ENCODE measurements at regions of chr14 and their contacts with region 1.

Region 1: GRCh38 chr14:74493343-74494261 is at the start of gene ISCA2:
- DNase-seq: peak; percentile 95 to 99 (median 98)
- ATAC-seq: peak; percentile 94
- H3K4me3 ChIP-seq: peak within 1 kb of the TSS; percentile 96
- H3K4me3 Mint-ChIP-seq: peak within 1 kb of the TSS in 1 of 10 donors; percentile 89
- H3K27ac ChIP-seq: peak within 1 kb of the TSS; percentile 91
- H3K27ac Mint-ChIP-seq: peak within 1 kb of the TSS in 7 of 9 donors; percentile 87 to 96 (median 91)
- H3K4me1 ChIP-seq: peaks cover 12 to 18% of the 10 kb centered on the region in 2 donors
- H3K4me1 Mint-ChIP-seq: peaks cover 7 to 45% (median 37%) of the 10 kb centered on the region in 7 donors
- H3K27me3 ChIP-seq: no peaks in the 10 kb centered on the region
- H3K27me3 Mint-ChIP-seq: no peaks in the 10 kb centered on the region
- total RNA-seq, gene ISCA2: 13.9 to 39.5 (median 25.2) TPM

Region 2: GRCh38 chr14:72926292-72927028 is 1567.1 kb before region 1 on chr14 and contains the start of gene DCAF4:
- CTCF ChIA-PET with region 1: no interaction called
- POLR2A ChIA-PET with region 1: no interaction called
- intact Hi-C with region 1: loop called (anchors 5 kb)
- DNase-seq: peak; percentile 67 to 96 (median 92)
- ATAC-seq: peak; percentile 96
- H3K4me3 ChIP-seq: peak within 1 kb of the TSS; percentile 64
- H3K4me3 Mint-ChIP-seq: peak within 1 kb of the TSS; percentile 93 to 99 (median 96)
- H3K27ac ChIP-seq: peak within 1 kb of the TSS; percentile 74
- H3K27ac Mint-ChIP-seq: peak within 1 kb of the TSS; percentile 58 to 96 (median 95)
- H3K4me1 ChIP-seq: peaks cover 0 to 3% of the 10 kb centered on the region in 2 donors
- H3K4me1 Mint-ChIP-seq: peaks cover 2 to 27% (median 11%) of the 10 kb centered on the region in 7 donors
- H3K27me3 ChIP-seq: no peaks in the 10 kb centered on the region
- H3K27me3 Mint-ChIP-seq: peaks cover 0 to 21% (median 0%) of the 10 kb centered on the region in 5 donors
- total RNA-seq, gene DCAF4: 17.6 to 37.8 (median 21.8) TPM

Region 3: DNA sequence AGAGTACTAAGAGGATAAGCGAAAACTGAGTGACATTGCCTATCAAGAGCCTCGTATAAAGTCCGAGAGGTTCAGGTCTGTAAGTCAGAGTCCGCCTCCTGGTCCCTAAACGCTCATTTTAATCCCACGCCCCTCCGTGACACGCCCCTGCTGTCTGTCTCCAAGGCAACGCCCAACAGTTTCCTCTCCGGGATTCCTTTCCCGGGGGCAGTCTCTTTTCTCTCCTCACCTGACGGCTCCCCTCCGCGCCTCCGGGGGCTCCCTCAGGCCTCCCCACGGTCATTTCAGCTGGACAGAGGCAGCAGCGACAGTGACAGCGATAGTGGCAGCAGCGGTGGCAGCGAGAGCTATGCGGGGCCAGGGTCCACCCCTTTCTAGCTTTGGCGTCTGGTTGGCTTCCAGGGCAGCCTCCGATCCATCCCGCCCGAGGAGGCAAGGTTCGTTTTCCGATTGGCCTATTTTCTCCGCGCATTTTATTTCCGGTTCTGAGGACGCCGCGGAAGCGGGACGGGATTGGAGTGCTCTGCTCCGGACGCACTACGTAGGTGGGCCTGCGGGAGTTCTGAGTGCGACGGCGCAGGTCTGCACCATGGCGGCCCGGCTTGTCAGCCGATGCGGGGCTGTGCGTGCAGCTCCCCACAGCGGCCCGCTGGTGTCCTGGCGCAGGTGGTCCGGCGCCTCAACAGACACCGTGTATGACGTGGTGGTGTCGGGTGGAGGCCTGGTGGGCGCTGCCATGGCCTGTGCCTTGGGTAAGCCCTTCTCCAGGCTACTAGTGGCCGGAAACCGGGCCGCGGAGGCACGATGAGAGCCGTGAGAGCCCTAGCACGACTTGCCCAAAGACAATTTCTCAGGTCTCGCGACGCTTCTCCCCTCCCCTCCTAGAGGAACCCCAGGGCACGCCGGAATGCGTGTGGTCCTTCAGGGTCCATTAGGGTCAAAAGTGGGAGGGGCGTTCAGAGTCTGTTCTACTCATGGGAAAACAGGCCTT is 543.6 kb before region 1 on chr14 and contains the starts of genes COQ6 and FAM161B:
- CTCF ChIA-PET with region 1: no interaction called
- POLR2A ChIA-PET with region 1: no interaction called
- intact Hi-C with region 1: loop called in 1 of 2 experiments (anchors 1 kb)
- DNase-seq: peak; percentile 82 to 97 (median 95)
- ATAC-seq: peak; percentile 96
- H3K4me3 ChIP-seq: peak within 1 kb of the TSS; percentile 92
- H3K4me3 Mint-ChIP-seq: peak within 1 kb of the TSS; percentile 96 to 99 (median 98)
- H3K27ac ChIP-seq: peak within 1 kb of the TSS; percentile 94
- H3K27ac Mint-ChIP-seq: peak within 1 kb of the TSS; percentile 93 to 98 (median 95)
- H3K4me1 ChIP-seq: peaks cover 0 to 4% of the 10 kb centered on the region in 2 donors
- H3K4me1 Mint-ChIP-seq: peaks cover 5 to 34% (median 27%) of the 10 kb centered on the region in 7 donors
- H3K27me3 ChIP-seq: no peaks in the 10 kb centered on the region
- H3K27me3 Mint-ChIP-seq: no peaks in the 10 kb centered on the region
- total RNA-seq, gene COQ6: 22.8 to 47.3 (median 36.4) TPM
- total RNA-seq, gene FAM161B: 1.8 to 6.6 (median 3.7) TPM

Region 4: DNA sequence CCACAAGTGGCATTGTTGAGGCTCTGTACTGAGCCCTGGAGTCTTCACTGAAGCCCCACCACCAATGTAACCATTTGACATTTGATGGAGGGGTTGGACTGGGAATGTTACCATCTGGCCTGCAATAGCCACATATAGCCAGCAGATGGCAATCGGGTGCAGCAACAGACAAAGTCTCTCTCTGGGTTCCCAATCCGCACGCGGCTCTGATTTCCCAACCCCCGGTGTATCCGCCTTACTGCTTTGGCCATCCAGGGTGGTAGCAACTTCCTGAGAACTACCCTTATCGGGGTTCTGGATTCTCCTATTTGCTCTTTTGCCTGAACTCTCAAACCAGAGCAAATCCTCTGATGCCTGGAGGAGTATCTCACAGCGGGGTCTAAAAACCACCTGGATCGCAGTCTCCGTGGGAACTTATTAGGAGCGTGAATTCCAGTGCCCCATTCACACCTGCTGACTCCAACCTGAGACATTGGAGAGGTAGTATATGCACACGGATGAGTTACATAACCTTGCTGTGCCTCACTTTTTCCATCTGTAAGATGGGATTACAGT is 131.2 kb before region 1 on chr14:
- CTCF ChIA-PET with region 1: no interaction called
- POLR2A ChIA-PET with region 1: no interaction called
- intact Hi-C with region 1: loop called (anchors 1 kb)
- DNase-seq: peak; percentile 21 to 62 (median 57)
- ATAC-seq: peak; percentile 84
- H3K4me3 ChIP-seq: no peak overlapping the region
- H3K4me3 Mint-ChIP-seq: no peak overlapping the region
- H3K27ac ChIP-seq: no peak overlapping the region
- H3K27ac Mint-ChIP-seq: no peak overlapping the region
- H3K4me1 ChIP-seq: no peaks in the 10 kb centered on the region
- H3K4me1 Mint-ChIP-seq: no peaks in the 10 kb centered on the region
- H3K27me3 ChIP-seq: no peaks in the 10 kb centered on the region
- H3K27me3 Mint-ChIP-seq: peaks cover 5 to 19% (median 13%) of the 10 kb centered on the region in 5 donors

Region 5: DNA sequence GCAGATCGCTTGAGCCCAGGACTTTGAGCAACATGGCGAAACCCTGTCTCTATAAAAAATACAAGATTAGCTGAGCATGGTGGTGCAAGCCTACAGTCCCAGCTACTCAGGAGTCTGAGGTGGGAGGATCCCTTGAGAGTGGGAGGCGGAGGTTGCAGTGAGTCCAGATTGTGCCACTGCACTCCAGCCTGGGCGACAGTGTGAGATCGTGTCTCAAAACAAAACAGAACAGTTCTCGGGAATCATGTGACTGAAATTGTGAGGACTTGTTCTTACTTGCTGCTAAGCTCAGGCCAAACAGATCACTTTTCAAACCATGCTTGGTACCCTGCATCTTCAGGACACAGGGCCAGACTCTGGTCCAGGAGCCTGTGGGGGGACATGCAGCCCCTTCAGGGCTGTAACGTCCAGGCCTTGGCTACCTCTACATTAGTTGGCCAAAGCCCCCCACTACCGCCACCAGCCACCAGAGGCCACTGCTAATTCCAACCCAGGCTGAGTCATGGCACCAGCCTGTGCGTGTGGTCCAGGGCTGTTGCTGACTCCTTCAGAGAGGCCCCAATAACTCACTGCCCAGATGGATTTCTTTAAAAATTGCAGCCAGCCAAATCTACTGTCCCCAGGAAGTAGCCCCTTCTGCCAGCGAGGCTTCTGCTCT is 34.2 kb before region 1 on chr14:
- CTCF ChIA-PET with region 1: no interaction called
- POLR2A ChIA-PET with region 1: no interaction called
- intact Hi-C with region 1: loop called in 1 of 2 experiments (anchors 1 kb)
- DNase-seq: no peak
- ATAC-seq: peak; percentile 52
- H3K4me3 ChIP-seq: no peak overlapping the region
- H3K4me3 Mint-ChIP-seq: no peak overlapping the region
- H3K27ac ChIP-seq: no peak overlapping the region
- H3K27ac Mint-ChIP-seq: no peak overlapping the region
- H3K4me1 ChIP-seq: no peaks in the 10 kb centered on the region
- H3K4me1 Mint-ChIP-seq: peaks cover 0 to 1% (median 0%) of the 10 kb centered on the region in 7 donors
- H3K27me3 ChIP-seq: no peaks in the 10 kb centered on the region
- H3K27me3 Mint-ChIP-seq: peaks cover 0 to 21% (median 9%) of the 10 kb centered on the region in 5 donors

Region 6: DNA sequence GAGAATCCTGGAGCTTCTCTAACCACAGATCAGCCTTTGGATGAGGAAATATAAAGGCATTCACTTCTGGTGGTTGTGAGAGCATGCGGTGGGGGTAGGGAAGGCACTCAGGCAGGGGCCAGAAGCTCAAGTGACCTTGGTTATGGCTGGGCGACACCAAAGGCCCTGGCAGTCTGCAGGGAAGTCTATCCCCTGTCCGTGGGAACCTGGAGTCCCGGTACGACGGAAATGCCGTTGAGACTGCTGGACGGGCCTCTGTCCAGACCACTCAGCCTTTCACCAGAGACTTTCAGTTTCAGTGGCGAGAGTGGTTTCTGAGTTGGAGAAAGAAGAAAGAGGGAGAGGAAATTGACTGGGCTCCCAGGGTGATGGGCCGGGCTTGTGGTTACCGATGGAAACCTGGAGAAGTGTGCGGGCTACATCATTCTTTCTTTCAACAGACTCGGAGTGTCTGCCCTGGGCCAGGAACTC is 20.9 kb after region 1 on chr14:
- CTCF ChIA-PET with region 1: no interaction called
- POLR2A ChIA-PET with region 1: no interaction called
- intact Hi-C with region 1: no loop called
- DNase-seq: no peak
- ATAC-seq: no peak
- H3K4me3 ChIP-seq: no peak overlapping the region
- H3K4me3 Mint-ChIP-seq: peak overlapping the region in 7 of 10 donors; percentile 1 to 68 (median 42)
- H3K27ac ChIP-seq: no peak overlapping the region
- H3K27ac Mint-ChIP-seq: no peak overlapping the region
- H3K4me1 ChIP-seq: no peaks in the 10 kb centered on the region
- H3K4me1 Mint-ChIP-seq: peaks cover 0 to 14% (median 12%) of the 10 kb centered on the region in 7 donors
- H3K27me3 ChIP-seq: no peaks in the 10 kb centered on the region
- H3K27me3 Mint-ChIP-seq: peaks cover 3 to 47% (median 10%) of the 10 kb centered on the region in 5 donors

Region 7: GRCh38 chr14:74712499-74713394 is 219.1 kb after region 1 on chr14 and contains the starts of genes AREL1 and FCF1:
- CTCF ChIA-PET with region 1: no interaction called
- POLR2A ChIA-PET with region 1: no interaction called
- intact Hi-C with region 1: loop called (anchors 1 to 5 kb)
- DNase-seq: peak; percentile 53 to 87 (median 82)
- ATAC-seq: peak; percentile 96
- H3K4me3 ChIP-seq: peak within 1 kb of the TSS; percentile 75
- H3K4me3 Mint-ChIP-seq: peak within 1 kb of the TSS; percentile 93 to 100 (median 97)
- H3K27ac ChIP-seq: peak within 1 kb of the TSS; percentile 96
- H3K27ac Mint-ChIP-seq: peak within 1 kb of the TSS; percentile 95 to 100 (median 98)
- H3K4me1 ChIP-seq: peaks cover 9 to 24% of the 10 kb centered on the region in 2 donors
- H3K4me1 Mint-ChIP-seq: peaks cover 33 to 79% (median 66%) of the 10 kb centered on the region in 7 donors
- H3K27me3 ChIP-seq: no peaks in the 10 kb centered on the region
- H3K27me3 Mint-ChIP-seq: no peaks in the 10 kb centered on the region
- total RNA-seq, gene AREL1: 35.6 to 52.0 (median 43.5) TPM
- total RNA-seq, gene FCF1: 36.5 to 66.6 (median 60.8) TPM

Region 8: GRCh38 chr14:75982266-75983018 is 1488.8 kb after region 1 on chr14:
- CTCF ChIA-PET with region 1: no interaction called
- POLR2A ChIA-PET with region 1: no interaction called
- intact Hi-C with region 1: loop called in 1 of 2 experiments (anchors 2 kb)
- DNase-seq: peak; percentile 69 to 83 (median 80)
- ATAC-seq: peak; percentile 83
- H3K4me3 ChIP-seq: peak overlapping the region; percentile 83
- H3K4me3 Mint-ChIP-seq: peak overlapping the region; percentile 80 to 99 (median 88)
- H3K27ac ChIP-seq: peak overlapping the region; percentile 84
- H3K27ac Mint-ChIP-seq: peak overlapping the region; percentile 58 to 97 (median 90)
- H3K4me1 ChIP-seq: peaks cover 18 to 32% of the 10 kb centered on the region in 2 donors
- H3K4me1 Mint-ChIP-seq: peaks cover 43 to 64% (median 56%) of the 10 kb centered on the region in 7 donors
- H3K27me3 ChIP-seq: no peaks in the 10 kb centered on the region
- H3K27me3 Mint-ChIP-seq: peaks cover 0 to 24% (median 0%) of the 10 kb centered on the region in 5 donors

Measured in naive thymus-derived CD4-positive, alpha-beta T cell (primary cell).